WTC11 (cell line): ENCODE measurements at regions of chr17 and their contacts with region 1.

Region 1: GRCh38 chr17:74961657-74962490 is 10.7 kb downstream of the HID1 start:
- DNase-seq: peak; percentile 94
- ATAC-seq: peak; percentile 81
- H3K4me3 Mint-ChIP-seq: no peak overlapping the region
- H3K27ac Mint-ChIP-seq: no peak overlapping the region
- H3K4me1 Mint-ChIP-seq: peaks cover 8% of the 10 kb centered on the region
- H3K27me3 Mint-ChIP-seq: peaks cover 16% of the 10 kb centered on the region
- CTCF ChIP-seq: peak; percentile 88

Region 2: GRCh38 chr17:74842599-74843351 is 119.1 kb before region 1 on chr17:
- CTCF ChIA-PET with region 1: interaction called, 24 read pairs
- POLR2A ChIA-PET with region 1: no interaction called
- DNase-seq: peak; percentile 75
- ATAC-seq: peak; percentile 81
- H3K4me3 Mint-ChIP-seq: peak overlapping the region; percentile 22; the same call in 1 of the 2 replicates
- H3K27ac Mint-ChIP-seq: no peak overlapping the region
- H3K4me1 Mint-ChIP-seq: peaks cover 21% of the 10 kb centered on the region
- H3K27me3 Mint-ChIP-seq: peaks cover 52% of the 10 kb centered on the region
- CTCF ChIP-seq: no peak

Region 3: GRCh38 chr17:74892974-74893911 is 68.6 kb before region 1 on chr17 and contains the start of gene FADS6:
- CTCF ChIA-PET with region 1: interaction called, 12 read pairs
- POLR2A ChIA-PET with region 1: no interaction called
- DNase-seq: peak; percentile 41
- ATAC-seq: peak; percentile 76
- H3K4me3 Mint-ChIP-seq: peak within 1 kb of the TSS; percentile 78
- H3K27ac Mint-ChIP-seq: no peak within 1 kb of the TSS
- H3K4me1 Mint-ChIP-seq: peaks cover 10% of the 10 kb centered on the region
- H3K27me3 Mint-ChIP-seq: peaks cover 69% of the 10 kb centered on the region
- CTCF ChIP-seq: no peak
- total RNA-seq, gene FADS6: 1.1 to 2.2 TPM (median 1.2 TPM) in 3 replicates

Region 4: GRCh38 chr17:74945543-74945942 is 16.3 kb before region 1 on chr17:
- CTCF ChIA-PET with region 1: interaction called, 56 read pairs
- POLR2A ChIA-PET with region 1: no interaction called
- DNase-seq: no peak
- ATAC-seq: no peak
- H3K4me3 Mint-ChIP-seq: no peak overlapping the region
- H3K27ac Mint-ChIP-seq: no peak overlapping the region
- H3K4me1 Mint-ChIP-seq: peaks cover 19% of the 10 kb centered on the region
- H3K27me3 Mint-ChIP-seq: peaks cover 10% of the 10 kb centered on the region
- CTCF ChIP-seq: no peak

Region 5: GRCh38 chr17:75006653-75007052 is 44.8 kb after region 1 on chr17:
- CTCF ChIA-PET with region 1: interaction called, 139 read pairs
- POLR2A ChIA-PET with region 1: interaction called, 18 read pairs
- DNase-seq: no peak
- ATAC-seq: no peak
- H3K4me3 Mint-ChIP-seq: no peak overlapping the region
- H3K27ac Mint-ChIP-seq: no peak overlapping the region; the same call in 1 of the 2 replicates
- H3K4me1 Mint-ChIP-seq: peaks cover 10% of the 10 kb centered on the region
- H3K27me3 Mint-ChIP-seq: no peaks in the 10 kb centered on the region
- CTCF ChIP-seq: no peak

Region 6: GRCh38 chr17:75034236-75034908 is 72.5 kb after region 1 on chr17:
- CTCF ChIA-PET with region 1: interaction called, 48 read pairs
- POLR2A ChIA-PET with region 1: interaction called, 7 read pairs
- DNase-seq: peak; percentile 96
- ATAC-seq: peak; percentile 42
- H3K4me3 Mint-ChIP-seq: peak overlapping the region; percentile 99
- H3K27ac Mint-ChIP-seq: peak overlapping the region; percentile 94
- H3K4me1 Mint-ChIP-seq: peaks cover 26% of the 10 kb centered on the region
- H3K27me3 Mint-ChIP-seq: peaks cover 26% of the 10 kb centered on the region
- CTCF ChIP-seq: no peak

Region 7: GRCh38 chr17:75096082-75096625 is 134.3 kb after region 1 on chr17:
- CTCF ChIA-PET with region 1: no interaction called
- POLR2A ChIA-PET with region 1: no interaction called
- DNase-seq: no peak
- ATAC-seq: peak; percentile 19
- H3K4me3 Mint-ChIP-seq: no peak overlapping the region
- H3K27ac Mint-ChIP-seq: peak overlapping the region; percentile 84
- H3K4me1 Mint-ChIP-seq: peaks cover 21% of the 10 kb centered on the region
- H3K27me3 Mint-ChIP-seq: no peaks in the 10 kb centered on the region
- CTCF ChIP-seq: no peak

Region 8: GRCh38 chr17:75109407-75110233 is 147.7 kb after region 1 on chr17 and contains the start of gene ARMC7:
- CTCF ChIA-PET with region 1: interaction called, 24 read pairs
- POLR2A ChIA-PET with region 1: no interaction called
- DNase-seq: peak; percentile 95
- ATAC-seq: peak; percentile 68
- H3K4me3 Mint-ChIP-seq: peak within 1 kb of the TSS; percentile 90
- H3K27ac Mint-ChIP-seq: peak within 1 kb of the TSS; percentile 94
- H3K4me1 Mint-ChIP-seq: peaks cover 25% of the 10 kb centered on the region
- H3K27me3 Mint-ChIP-seq: no peaks in the 10 kb centered on the region
- CTCF ChIP-seq: no peak
- total RNA-seq, gene ARMC7: 13.2 to 15.9 TPM (median 14.8 TPM) in 3 replicates